SK-N-SH (cell line): ENCODE measurements at regions of chr2 and their contacts with region 1.

Region 1: DNA sequence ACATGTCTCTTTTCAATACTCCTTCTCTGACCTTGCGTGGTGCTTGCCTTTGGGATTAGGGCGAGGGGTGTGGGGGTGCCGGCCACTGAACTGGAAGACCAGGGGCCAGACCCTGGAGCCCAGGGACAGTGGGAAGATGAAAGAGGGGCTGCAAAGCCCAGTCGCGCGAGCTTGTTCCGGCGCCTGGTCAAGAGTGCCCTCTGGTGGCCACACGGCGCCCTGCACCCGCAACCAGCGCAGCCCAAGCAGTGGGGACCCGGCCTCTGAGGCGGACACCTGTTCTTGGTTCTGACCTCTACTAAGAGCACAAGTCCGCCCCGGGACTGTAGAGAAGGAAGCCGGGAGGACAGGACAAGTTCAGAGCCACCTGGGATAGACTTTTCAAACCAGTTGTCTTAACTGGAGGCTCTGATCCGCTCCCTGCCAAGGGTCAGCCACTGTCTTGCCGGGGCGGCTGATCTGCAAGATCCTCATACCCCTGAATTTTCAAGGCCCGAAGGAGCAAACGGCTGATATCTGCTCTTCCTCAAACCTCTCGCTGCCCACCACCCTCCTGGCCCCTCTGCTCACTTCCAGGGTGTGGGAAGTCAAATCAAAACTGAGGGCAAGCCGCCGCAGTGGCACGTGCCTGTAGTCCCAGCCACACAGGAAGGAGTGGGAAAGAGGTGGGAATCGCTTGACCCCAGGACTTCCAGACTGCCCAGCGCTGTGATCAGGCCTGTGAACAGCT is 14.9 kb upstream of the MSH6 start:
- DNase-seq: peak; percentile 90
- H3K4me3 ChIP-seq: peak overlapping the region in 1 of 2 experiments; percentile 28; a peak in 2 of 4 replicates
- H3K27ac ChIP-seq: no peak overlapping the region
- H3K4me1 ChIP-seq: no peaks in the 10 kb centered on the region
- H3K27me3 ChIP-seq: no peaks in the 10 kb centered on the region
- CTCF ChIP-seq: peak; percentile 99
- EP300 ChIP-seq: no peak; a peak in 1 of 4 replicates
- RAD21 ChIP-seq: peak; percentile 97

Region 2: DNA sequence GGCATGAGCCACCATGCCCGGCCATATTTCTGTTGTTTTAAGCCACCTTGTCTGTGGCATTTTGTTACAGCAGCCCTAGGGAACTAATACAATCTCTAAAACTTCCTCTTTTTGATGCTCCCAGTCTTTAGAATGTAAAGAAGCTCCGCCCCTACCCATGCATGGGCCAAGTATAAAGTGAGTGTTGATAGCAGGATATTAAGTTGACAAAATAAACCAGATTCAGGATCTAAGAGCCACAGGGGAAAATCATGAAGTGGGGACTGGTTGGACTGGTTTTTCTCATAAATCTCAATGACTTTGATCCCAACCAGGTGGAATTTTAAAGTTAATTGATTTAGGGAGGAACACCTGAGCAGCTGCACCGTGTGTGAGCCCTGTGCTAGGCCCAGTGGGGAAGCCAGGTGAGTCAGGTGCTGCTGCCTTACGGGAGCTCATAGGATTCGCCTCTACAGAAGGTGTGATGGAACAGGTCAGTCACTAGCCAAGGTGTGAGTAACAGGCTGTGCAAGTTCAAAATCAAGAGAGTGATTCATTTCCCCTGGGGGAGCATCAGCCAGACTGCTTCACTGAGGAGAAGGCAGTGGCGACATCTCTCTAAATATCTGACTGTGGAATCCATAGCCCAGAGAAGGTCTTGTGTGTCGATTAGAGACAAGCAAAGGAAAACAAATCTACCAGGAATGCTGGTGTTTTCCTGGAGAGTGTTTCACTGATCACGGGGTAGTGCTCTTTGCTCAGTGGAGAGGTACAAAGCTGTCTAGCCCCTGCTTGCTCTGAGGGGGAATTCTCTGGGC is 428.1 kb before region 1 on chr2:
- CTCF ChIA-PET with region 1: interaction called, 46 read pairs
- POLR2A ChIA-PET with region 1: no interaction called
- DNase-seq: no peak
- H3K4me3 ChIP-seq: no peak overlapping the region
- H3K27ac ChIP-seq: no peak overlapping the region; a peak in 1 of 4 replicates
- H3K4me1 ChIP-seq: peaks cover 0 to 18% of the 10 kb centered on the region in 2 experiments; a peak in 2 of 4 replicates
- H3K27me3 ChIP-seq: no peaks in the 10 kb centered on the region
- CTCF ChIP-seq: no peak
- EP300 ChIP-seq: no peak
- RAD21 ChIP-seq: no peak

Region 3: GRCh38 chr2:47386551-47386950 is 381.5 kb before region 1 on chr2:
- CTCF ChIA-PET with region 1: interaction called, 11 read pairs
- POLR2A ChIA-PET with region 1: no interaction called
- DNase-seq: no peak
- H3K4me3 ChIP-seq: no peak overlapping the region
- H3K27ac ChIP-seq: no peak overlapping the region
- H3K4me1 ChIP-seq: no peaks in the 10 kb centered on the region; a peak in 1 of 4 replicates
- H3K27me3 ChIP-seq: no peaks in the 10 kb centered on the region
- CTCF ChIP-seq: no peak
- EP300 ChIP-seq: no peak
- RAD21 ChIP-seq: no peak

Region 4: GRCh38 chr2:47483191-47483590 is 284.9 kb before region 1 on chr2:
- CTCF ChIA-PET with region 1: interaction called, 10 read pairs
- POLR2A ChIA-PET with region 1: no interaction called
- DNase-seq: no peak
- H3K4me3 ChIP-seq: no peak overlapping the region
- H3K27ac ChIP-seq: no peak overlapping the region
- H3K4me1 ChIP-seq: no peaks in the 10 kb centered on the region
- H3K27me3 ChIP-seq: no peaks in the 10 kb centered on the region
- CTCF ChIP-seq: no peak
- EP300 ChIP-seq: no peak
- RAD21 ChIP-seq: no peak

Region 5: GRCh38 chr2:47617028-47617427 is 151.0 kb before region 1 on chr2:
- CTCF ChIA-PET with region 1: interaction called, 10 read pairs
- POLR2A ChIA-PET with region 1: no interaction called
- DNase-seq: no peak
- H3K4me3 ChIP-seq: no peak overlapping the region
- H3K27ac ChIP-seq: no peak overlapping the region
- H3K4me1 ChIP-seq: no peaks in the 10 kb centered on the region
- H3K27me3 ChIP-seq: peaks cover 8% of the 10 kb centered on the region; the same call in 1 of the 2 replicates
- CTCF ChIP-seq: no peak
- EP300 ChIP-seq: no peak
- RAD21 ChIP-seq: no peak

Region 6: GRCh38 chr2:47751875-47752357 is 16.1 kb before region 1 on chr2:
- CTCF ChIA-PET with region 1: interaction called, 25 read pairs
- POLR2A ChIA-PET with region 1: no interaction called
- DNase-seq: no peak
- H3K4me3 ChIP-seq: no peak overlapping the region
- H3K27ac ChIP-seq: no peak overlapping the region
- H3K4me1 ChIP-seq: peaks cover 4% of the 10 kb centered on the region in 2 experiments; a peak in 1 of 4 replicates
- H3K27me3 ChIP-seq: no peaks in the 10 kb centered on the region
- CTCF ChIP-seq: no peak
- EP300 ChIP-seq: no peak
- RAD21 ChIP-seq: no peak

Region 7: DNA sequence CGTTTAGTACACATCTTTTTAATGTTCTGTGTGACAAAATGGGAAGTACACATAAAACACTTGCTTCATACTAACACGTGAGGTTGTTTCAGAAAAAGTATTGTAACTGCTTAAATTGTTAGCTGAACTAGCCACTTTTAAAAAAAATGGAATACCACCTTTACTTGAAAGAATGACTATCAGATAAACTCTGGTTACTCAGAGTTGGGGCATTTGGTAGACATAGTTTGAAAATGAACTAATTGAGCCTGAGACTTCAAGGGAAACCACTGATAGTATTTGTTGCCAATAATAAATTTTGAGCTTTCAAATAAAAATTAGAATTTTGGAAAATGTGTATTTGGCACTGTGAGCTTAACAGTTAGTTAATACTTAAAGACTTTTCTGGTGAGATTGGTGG is 241.2 kb after region 1 on chr2:
- CTCF ChIA-PET with region 1: no interaction called
- POLR2A ChIA-PET with region 1: no interaction called
- DNase-seq: no peak
- H3K4me3 ChIP-seq: no peak overlapping the region
- H3K27ac ChIP-seq: no peak overlapping the region
- H3K4me1 ChIP-seq: no peaks in the 10 kb centered on the region
- H3K27me3 ChIP-seq: peaks cover 4% of the 10 kb centered on the region; the same call in 1 of the 2 replicates
- CTCF ChIP-seq: no peak
- EP300 ChIP-seq: no peak
- RAD21 ChIP-seq: no peak

Region 8: GRCh38 chr2:48107326-48107925 is 339.4 kb after region 1 on chr2:
- CTCF ChIA-PET with region 1: interaction called, 10 read pairs
- POLR2A ChIA-PET with region 1: no interaction called
- DNase-seq: no peak
- H3K4me3 ChIP-seq: 0 out of 4 replicates have a peak overlapping the region, but pooled peaks of 1 of the 2 experiments have one; percentile 32
- H3K27ac ChIP-seq: peak overlapping the region; percentile 71 to 96
- H3K4me1 ChIP-seq: peaks cover 18 to 24% of the 10 kb centered on the region in 2 experiments
- H3K27me3 ChIP-seq: no peaks in the 10 kb centered on the region
- CTCF ChIP-seq: peak; percentile 22; the same call in 1 of the 2 replicates
- EP300 ChIP-seq: no peak
- RAD21 ChIP-seq: no peak